PC-9 (cell line): ENCODE measurements at regions of chr11 and their contacts with region 1.

Region 1: GRCh38 chr11:75867775-75868374 is 52.9 kb downstream of the UVRAG start:
- DNase-seq: peak; percentile 14 to 52
- H3K4me3 ChIP-seq: no peak overlapping the region
- H3K27ac ChIP-seq: no peak overlapping the region
- H3K4me1 ChIP-seq: peaks cover 19% of the 10 kb centered on the region
- H3K27me3 ChIP-seq: no peaks in the 10 kb centered on the region
- CTCF ChIP-seq: peak; percentile 95

Region 2: GRCh38 chr11:75706260-75706729 is 161.6 kb before region 1 on chr11:
- CTCF ChIA-PET with region 1: interaction called, 3 read pairs
- POLR2A ChIA-PET with region 1: no interaction called
- intact Hi-C with region 1: loop called (anchors 5 kb)
- DNase-seq: peak; percentile 57 to 64
- H3K4me3 ChIP-seq: no peak overlapping the region
- H3K27ac ChIP-seq: no peak overlapping the region
- H3K4me1 ChIP-seq: peaks cover 3% of the 10 kb centered on the region; the same call in 1 of the 2 replicates
- H3K27me3 ChIP-seq: no peaks in the 10 kb centered on the region
- CTCF ChIP-seq: peak; percentile 96

Region 3: DNA sequence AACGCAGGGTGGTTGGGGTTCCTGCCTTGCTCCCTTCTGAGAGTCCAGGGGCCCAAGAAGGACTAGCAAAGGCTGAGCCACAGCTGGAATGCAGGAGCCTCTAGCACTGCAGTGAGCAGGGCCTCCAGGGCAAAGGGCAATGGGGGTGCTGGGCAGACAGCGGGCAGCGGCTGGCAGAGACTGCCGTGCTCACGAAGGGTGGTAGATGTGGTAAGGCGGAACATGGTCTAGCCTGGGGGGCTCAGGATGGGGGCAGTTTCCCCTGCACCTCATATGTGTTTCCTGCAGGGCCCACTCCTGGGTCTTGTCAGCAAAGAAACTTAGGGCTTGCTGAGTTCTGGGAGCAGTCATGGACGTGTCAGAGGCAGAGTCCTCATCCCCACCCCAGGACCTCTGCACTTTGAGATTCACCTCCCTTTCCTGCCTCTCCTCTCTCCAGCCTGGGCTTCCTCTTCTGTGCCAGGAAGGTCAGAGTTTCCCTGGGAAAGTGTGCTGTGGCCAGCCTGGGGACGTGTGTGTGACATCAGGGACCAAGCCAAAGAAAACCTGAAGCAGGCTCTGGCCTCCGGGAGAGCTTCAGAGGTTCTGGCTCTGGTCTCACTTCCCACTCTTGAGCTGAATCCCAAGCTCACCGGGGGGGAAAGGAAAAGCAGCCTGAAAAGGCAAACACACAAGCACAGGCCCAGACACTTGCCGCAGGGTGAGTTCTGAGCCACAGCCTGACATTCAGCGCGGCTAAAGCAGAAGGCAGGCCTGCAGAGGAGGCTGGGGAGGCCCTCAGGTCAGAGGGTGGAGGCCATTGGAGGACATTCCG is 145.8 kb before region 1 on chr11:
- CTCF ChIA-PET with region 1: no interaction called
- POLR2A ChIA-PET with region 1: no interaction called
- intact Hi-C with region 1: loop called (anchors 2 kb)
- DNase-seq: no peak
- H3K4me3 ChIP-seq: no peak overlapping the region
- H3K27ac ChIP-seq: no peak overlapping the region
- H3K4me1 ChIP-seq: peaks cover 11% of the 10 kb centered on the region
- H3K27me3 ChIP-seq: no peaks in the 10 kb centered on the region
- CTCF ChIP-seq: no peak